ENCODE measurements at regions of chr12 and their contacts with region 1.

Region 1: GRCh38 chr12:15131431-15131830 is 89.8 kb downstream of the RERG start:
- DNase-seq: no peak
- ATAC-seq: no peak
- H3K4me3 ChIP-seq: no peak overlapping the region
- H3K4me3 Mint-ChIP-seq: no peak overlapping the region
- H3K27ac ChIP-seq: no peak overlapping the region
- H3K27ac Mint-ChIP-seq: no peak overlapping the region
- H3K4me1 ChIP-seq: no peaks in the 10 kb centered on the region
- H3K4me1 Mint-ChIP-seq: no peaks in the 10 kb centered on the region
- H3K27me3 ChIP-seq: no peaks in the 10 kb centered on the region
- H3K27me3 Mint-ChIP-seq: no peaks in the 10 kb centered on the region
- CTCF ChIP-seq: no peak

Region 2: GRCh38 chr12:15116086-15116485 is 15.3 kb before region 1 on chr12:
- CTCF ChIA-PET with region 1: no interaction called
- POLR2A ChIA-PET with region 1: no interaction called
- intact Hi-C with region 1: loop called in 1 of 2 experiments (anchors 1 kb)
- DNase-seq: no peak
- ATAC-seq: no peak
- H3K4me3 ChIP-seq: no peak overlapping the region
- H3K4me3 Mint-ChIP-seq: no peak overlapping the region
- H3K27ac ChIP-seq: no peak overlapping the region
- H3K27ac Mint-ChIP-seq: no peak overlapping the region
- H3K4me1 ChIP-seq: no peaks in the 10 kb centered on the region
- H3K4me1 Mint-ChIP-seq: no peaks in the 10 kb centered on the region
- H3K27me3 ChIP-seq: no peaks in the 10 kb centered on the region
- H3K27me3 Mint-ChIP-seq: peaks cover 15% of the 10 kb centered on the region
- CTCF ChIP-seq: no peak

Region 3: GRCh38 chr12:15268927-15269552 is 137.6 kb after region 1 on chr12:
- CTCF ChIA-PET with region 1: no interaction called
- POLR2A ChIA-PET with region 1: no interaction called
- intact Hi-C with region 1: no loop called
- DNase-seq: peak in 5 of 9 experiments; percentile 18 to 71 (median 27)
- ATAC-seq: peak; percentile 72
- H3K4me3 ChIP-seq: no peak overlapping the region
- H3K4me3 Mint-ChIP-seq: no peak overlapping the region
- H3K27ac ChIP-seq: no peak overlapping the region
- H3K27ac Mint-ChIP-seq: no peak overlapping the region
- H3K4me1 ChIP-seq: no peaks in the 10 kb centered on the region
- H3K4me1 Mint-ChIP-seq: no peaks in the 10 kb centered on the region
- H3K27me3 ChIP-seq: no peaks in the 10 kb centered on the region
- H3K27me3 Mint-ChIP-seq: peaks cover 5% of the 10 kb centered on the region
- CTCF ChIP-seq: peak; percentile 89